Endothelial cell of umbilical vein (primary cell): ENCODE measurements at regions of chr2 and their contacts with region 1.

Region 1: GRCh38 chr2:177552422-177553175 is 160.0 kb downstream of the AGPS start:
- DNase-seq: peak; percentile 90
- H3K4me3 ChIP-seq: peak overlapping the region; percentile 57 to 93 (median 84)
- H3K27ac ChIP-seq: peak overlapping the region; percentile 91
- H3K4me1 ChIP-seq: peaks cover 41% of the 10 kb centered on the region
- H3K27me3 ChIP-seq: no peaks in the 10 kb centered on the region
- CTCF ChIP-seq: no peak
- POLR2A ChIP-seq: peak; percentile 47

Region 2: GRCh38 chr2:177392373-177393202 is 160.0 kb before region 1 on chr2 and contains the start of gene AGPS:
- CTCF ChIA-PET with region 1: no interaction called
- POLR2A ChIA-PET with region 1: no interaction called
- dilution Hi-C with region 1: no loop called
- intact Hi-C with region 1: loop called (anchors 2 kb)
- DNase-seq: peak; percentile 72
- H3K4me3 ChIP-seq: peak within 1 kb of the TSS; percentile 56 to 99 (median 96)
- H3K27ac ChIP-seq: peak within 1 kb of the TSS; percentile 91
- H3K4me1 ChIP-seq: peaks cover 49% of the 10 kb centered on the region
- H3K27me3 ChIP-seq: no peaks in the 10 kb centered on the region
- CTCF ChIP-seq: no peak
- POLR2A ChIP-seq: peak; percentile 85
- total RNA-seq, gene AGPS: 88.8 and 96.5 TPM in 2 replicates

Region 3: DNA sequence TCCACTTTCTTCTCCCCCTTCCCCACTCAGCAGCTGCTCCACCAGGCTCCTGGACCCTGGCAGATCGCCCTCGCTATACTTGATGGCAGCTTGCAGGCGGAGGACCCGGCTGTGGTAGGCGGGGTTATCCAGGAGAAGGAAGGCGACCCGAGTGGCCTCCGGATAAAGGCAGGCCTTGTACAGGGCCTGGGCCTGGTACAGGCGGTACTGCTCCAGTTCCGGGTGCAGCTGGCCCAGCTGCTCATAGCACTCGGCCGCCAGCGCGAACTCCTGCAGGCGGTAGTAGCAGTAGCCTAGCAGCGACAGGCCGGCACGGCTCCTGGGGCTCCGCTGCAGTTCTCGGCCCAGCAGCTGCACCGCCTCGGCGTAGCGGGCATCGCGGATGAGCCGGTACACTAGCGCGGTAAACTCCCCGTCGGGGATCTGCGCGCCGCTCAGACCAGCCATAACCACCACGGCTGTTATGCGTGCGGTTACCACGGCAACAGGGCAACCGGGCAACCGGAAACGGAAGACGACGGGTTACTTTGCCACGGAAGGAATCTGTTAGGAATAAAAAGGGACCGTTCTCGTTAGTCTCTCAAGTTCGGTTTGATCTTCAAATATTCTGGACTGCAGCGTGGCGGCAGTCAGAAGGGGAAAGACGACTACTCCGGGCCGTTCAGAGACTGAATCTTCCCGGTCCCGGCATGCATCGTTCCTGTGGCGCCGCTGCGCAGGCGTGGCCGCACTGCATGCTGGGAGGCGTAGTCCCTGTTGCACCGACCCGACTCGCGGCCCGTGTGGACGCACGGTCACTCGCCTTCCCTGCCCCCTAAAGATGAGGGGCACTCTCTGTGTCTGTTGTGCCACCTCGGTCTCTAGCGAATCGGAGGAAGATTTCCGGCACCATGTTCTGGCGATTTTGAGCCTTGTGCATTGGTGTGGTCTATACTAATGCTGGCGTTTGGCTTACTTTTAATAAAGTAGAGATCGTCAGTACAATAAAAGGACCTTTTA is 66.0 kb after region 1 on chr2:
- CTCF ChIA-PET with region 1: no interaction called
- POLR2A ChIA-PET with region 1: no interaction called
- dilution Hi-C with region 1: no loop called
- intact Hi-C with region 1: loop called (anchors 2 kb)
- DNase-seq: peak; percentile 94
- H3K4me3 ChIP-seq: peak overlapping the region; percentile 28 to 94 (median 46)
- H3K27ac ChIP-seq: peak overlapping the region; percentile 76
- H3K4me1 ChIP-seq: no peaks in the 10 kb centered on the region
- H3K27me3 ChIP-seq: no peaks in the 10 kb centered on the region
- CTCF ChIP-seq: no peak
- POLR2A ChIP-seq: peak; percentile 76

Region 4: GRCh38 chr2:177746358-177746757 is 193.8 kb after region 1 on chr2:
- CTCF ChIA-PET with region 1: no interaction called
- POLR2A ChIA-PET with region 1: no interaction called
- dilution Hi-C with region 1: no loop called
- intact Hi-C with region 1: loop called (anchors 5 kb)
- DNase-seq: peak; percentile 77
- H3K4me3 ChIP-seq: no peak overlapping the region
- H3K27ac ChIP-seq: peak overlapping the region; percentile 63
- H3K4me1 ChIP-seq: peaks cover 36% of the 10 kb centered on the region
- H3K27me3 ChIP-seq: no peaks in the 10 kb centered on the region
- CTCF ChIP-seq: no peak
- POLR2A ChIP-seq: no peak